T-cell (primary cell): ENCODE measurements at regions of chr12 and their contacts with region 1.

Region 1: DNA sequence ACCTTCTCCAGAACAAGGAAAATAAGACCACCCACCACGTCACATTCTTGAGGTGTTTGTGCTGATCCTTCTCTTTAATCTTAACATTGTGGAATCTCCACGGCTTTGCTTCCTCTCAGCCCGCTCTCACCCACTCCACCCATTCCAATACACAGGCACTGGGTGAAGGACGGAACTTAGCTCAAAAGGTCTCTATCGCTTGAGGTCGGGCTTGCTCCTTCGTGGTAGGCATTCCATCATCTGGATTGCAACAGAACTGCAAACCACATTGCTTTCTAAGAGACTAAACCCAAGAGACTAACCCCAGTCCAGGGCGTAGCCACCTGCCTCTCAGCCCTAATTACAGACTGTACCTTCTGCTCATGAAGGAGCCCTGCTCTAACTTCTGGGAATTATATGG is 24.0 kb upstream of the MDM2 start:
- DNase-seq: peak in 1 of 35 experiments; percentile 12
- ATAC-seq: no peak
- H3K4me3 ChIP-seq: no peak overlapping the region
- H3K4me3 Mint-ChIP-seq: no peak overlapping the region
- H3K27ac ChIP-seq: no peak overlapping the region
- H3K27ac Mint-ChIP-seq: no peak overlapping the region
- H3K4me1 ChIP-seq: no peaks in the 10 kb centered on the region
- H3K4me1 Mint-ChIP-seq: no peaks in the 10 kb centered on the region
- H3K27me3 ChIP-seq: no peaks in the 10 kb centered on the region
- H3K27me3 Mint-ChIP-seq: no peaks in the 10 kb centered on the region

Region 2: DNA sequence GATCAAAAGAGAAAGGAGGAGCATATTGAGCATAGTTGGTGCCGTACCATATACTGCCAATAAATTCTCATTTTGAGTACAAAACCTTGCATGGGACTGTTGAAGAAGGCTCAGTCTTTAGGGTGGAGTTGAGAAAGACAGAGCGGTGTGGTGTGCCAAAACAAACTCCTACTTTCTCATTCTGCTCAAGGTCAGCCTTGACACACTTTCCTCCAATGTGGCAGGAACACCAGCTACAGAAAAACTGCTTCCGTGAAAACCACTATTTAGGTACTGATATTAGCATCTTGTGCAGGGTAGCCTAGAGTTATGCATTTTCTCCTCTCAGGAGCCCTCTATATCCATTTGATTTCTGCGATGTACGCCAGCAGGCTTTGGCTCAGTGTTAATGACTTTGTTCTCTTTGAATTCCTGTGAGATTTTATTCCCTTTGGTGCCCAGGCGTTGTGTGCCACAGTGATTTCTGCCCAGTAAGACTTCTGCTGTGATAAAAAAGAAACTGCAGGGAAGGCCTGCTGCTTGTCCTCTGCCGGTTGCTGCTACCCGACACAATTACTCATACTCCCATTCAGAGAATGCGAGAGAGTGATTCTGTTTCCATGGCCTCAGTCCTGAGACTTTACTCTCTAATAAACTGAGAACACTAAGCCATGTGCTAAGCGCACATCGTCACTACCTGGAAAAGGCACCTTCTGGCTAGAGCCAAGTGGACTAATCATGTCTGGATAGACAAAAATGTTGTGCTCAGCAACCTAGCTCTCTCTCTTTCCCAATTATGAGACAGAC is 363.6 kb before region 1 on chr12:
- CTCF ChIA-PET with region 1: no interaction called
- POLR2A ChIA-PET with region 1: no interaction called
- DNase-seq: peak in 1 of 35 experiments; percentile 10
- ATAC-seq: no peak
- H3K4me3 ChIP-seq: no peak overlapping the region
- H3K4me3 Mint-ChIP-seq: peak overlapping the region in 1 of 3 donors; percentile 3
- H3K27ac ChIP-seq: peak overlapping the region; percentile 6
- H3K27ac Mint-ChIP-seq: peak overlapping the region in 1 of 2 donors; percentile 63
- H3K4me1 ChIP-seq: peaks cover 0 to 29% of the 10 kb centered on the region in 2 experiments
- H3K4me1 Mint-ChIP-seq: peaks cover 19 to 44% (median 23%) of the 10 kb centered on the region in 3 donors
- H3K27me3 ChIP-seq: no peaks in the 10 kb centered on the region
- H3K27me3 Mint-ChIP-seq: no peaks in the 10 kb centered on the region

Region 3: GRCh38 chr12:68675101-68675842 is 108.7 kb before region 1 on chr12:
- CTCF ChIA-PET with region 1: no interaction called
- POLR2A ChIA-PET with region 1: interaction called in 1 of 2 experiments, 11 read pairs
- DNase-seq: peak; percentile 60 to 89 (median 83)
- ATAC-seq: peak; percentile 97 to 98 (median 98)
- H3K4me3 ChIP-seq: no peak overlapping the region
- H3K4me3 Mint-ChIP-seq: peak overlapping the region; percentile 45 to 64 (median 63)
- H3K27ac ChIP-seq: peak overlapping the region; percentile 47
- H3K27ac Mint-ChIP-seq: peak overlapping the region; percentile 79 to 97
- H3K4me1 ChIP-seq: peaks cover 24 to 26% of the 10 kb centered on the region in 2 experiments
- H3K4me1 Mint-ChIP-seq: peaks cover 54 to 64% (median 61%) of the 10 kb centered on the region in 3 donors
- H3K27me3 ChIP-seq: no peaks in the 10 kb centered on the region
- H3K27me3 Mint-ChIP-seq: no peaks in the 10 kb centered on the region

Region 4: GRCh38 chr12:68772714-68773113 is 11.3 kb before region 1 on chr12:
- CTCF ChIA-PET with region 1: no interaction called
- POLR2A ChIA-PET with region 1: no interaction called
- DNase-seq: peak in 1 of 35 experiments; percentile 3
- ATAC-seq: peak in 1 of 4 experiments; percentile 55
- H3K4me3 ChIP-seq: peak overlapping the region in 1 of 2 donors; percentile 17
- H3K4me3 Mint-ChIP-seq: peak overlapping the region in 2 of 3 donors; percentile 26 to 75
- H3K27ac ChIP-seq: no peak overlapping the region
- H3K27ac Mint-ChIP-seq: peak overlapping the region; percentile 89 to 96
- H3K4me1 ChIP-seq: peaks cover 4 to 9% of the 10 kb centered on the region in 2 experiments
- H3K4me1 Mint-ChIP-seq: peaks cover 18 to 25% (median 22%) of the 10 kb centered on the region in 3 donors
- H3K27me3 ChIP-seq: no peaks in the 10 kb centered on the region
- H3K27me3 Mint-ChIP-seq: no peaks in the 10 kb centered on the region